Posterior vena cava (tissue), 2 donors: ENCODE measurements at regions of chr17 and their contacts with region 1.

Region 1: DNA sequence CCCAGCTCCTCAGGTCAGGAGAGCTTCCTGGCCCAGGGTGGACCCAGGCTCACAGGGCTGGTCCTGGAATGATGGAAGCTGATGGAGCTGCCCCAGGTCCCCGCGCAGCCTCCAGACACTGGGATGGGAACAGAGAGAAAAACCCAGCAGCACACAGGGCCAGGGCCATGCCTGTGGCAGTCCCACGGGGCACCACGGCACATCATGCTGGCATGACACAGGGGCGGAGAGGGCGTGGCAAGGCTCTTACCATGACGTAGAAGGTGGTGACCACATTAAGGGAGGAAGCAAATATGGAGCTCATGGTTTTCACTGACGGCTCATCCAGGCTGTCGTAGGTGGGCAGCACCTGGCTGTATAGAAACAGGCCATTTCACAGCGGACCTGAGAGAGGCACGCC is 18.3 kb downstream of the SLC38A10 start:
- DNase-seq: no peak

Region 2: DNA sequence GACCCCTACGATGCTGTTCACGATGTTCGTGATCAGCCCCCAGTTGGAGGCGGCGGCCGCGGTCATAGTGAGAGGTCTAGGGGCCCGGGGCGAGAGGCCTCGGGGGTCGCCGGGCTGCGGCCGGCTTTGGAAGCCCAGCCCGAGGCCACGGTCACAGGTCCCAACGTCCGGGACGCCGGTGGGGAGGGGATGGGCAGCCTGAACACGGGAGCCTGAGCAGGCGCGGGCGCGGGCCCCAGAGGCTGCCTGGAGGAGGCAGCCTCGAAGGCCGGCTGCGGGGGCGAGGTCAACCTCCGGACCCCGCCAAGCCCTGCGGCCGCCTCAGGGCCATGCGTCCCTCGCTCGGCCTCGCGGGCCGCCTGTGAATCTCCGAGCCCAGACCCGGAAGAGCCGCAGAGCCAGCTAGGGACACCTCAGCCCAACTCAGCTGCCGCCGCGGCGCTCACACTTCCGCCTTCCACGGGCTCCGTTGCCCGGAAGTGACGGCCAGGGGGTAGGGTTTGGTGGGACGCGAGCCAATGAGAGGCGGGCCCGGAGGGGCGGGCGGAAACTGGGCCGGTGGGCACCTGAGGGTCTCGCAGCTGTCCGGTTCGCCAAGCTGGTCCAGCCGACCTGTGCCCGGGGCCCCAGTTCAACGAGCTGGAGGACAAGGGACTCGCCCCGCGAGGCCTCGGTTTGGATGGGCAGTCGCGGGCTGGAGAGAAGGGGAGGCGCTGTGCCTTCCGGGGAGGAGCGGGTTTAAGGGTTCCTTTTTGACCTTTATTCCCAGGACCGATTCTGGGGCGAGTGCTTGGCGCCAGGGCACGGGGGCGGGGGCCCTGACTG is 18.3 kb after region 1 on chr17 and contains the start of gene SLC38A10:
- intact Hi-C with region 1: loop called in 1 of 2 experiments (anchors 1 kb)
- DNase-seq: peak; percentile 98
- total RNA-seq, gene SLC38A10: 59.6 to 85.1 TPM